Left cardiac atrium (tissue), 4 donors: ENCODE measurements at regions of chr3 and their contacts with region 1.

Region 1: DNA sequence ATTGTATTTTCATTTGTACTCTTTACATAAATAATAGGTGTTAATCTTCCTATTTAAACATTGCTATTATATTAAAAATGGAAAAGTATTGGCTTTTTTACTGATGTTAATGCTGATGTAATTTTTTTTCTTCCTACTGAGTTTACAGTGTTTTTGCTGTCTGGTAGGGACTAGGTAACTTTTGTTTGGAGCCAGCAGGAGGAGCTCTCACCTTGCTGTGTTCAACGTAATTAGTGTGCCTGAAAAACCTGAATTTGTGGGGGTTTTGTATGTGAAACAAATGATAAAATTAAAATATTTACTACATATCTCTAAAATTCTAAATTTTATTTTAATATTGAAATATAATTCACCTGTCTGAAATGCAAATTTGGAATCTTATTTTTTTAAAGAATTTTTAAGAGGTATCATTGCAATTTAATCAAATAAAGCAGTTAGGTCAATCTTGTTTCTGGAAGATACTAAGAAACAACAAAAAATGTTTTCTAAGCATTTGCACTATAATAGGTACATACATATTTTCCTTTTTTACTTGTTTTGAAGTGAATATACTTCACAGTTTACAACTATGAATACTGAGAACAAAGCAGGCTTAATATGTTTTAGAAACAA is 48.8 kb downstream of the EPHA6 start:
- DNase-seq: no peak
- ATAC-seq: no peak

Region 2: DNA sequence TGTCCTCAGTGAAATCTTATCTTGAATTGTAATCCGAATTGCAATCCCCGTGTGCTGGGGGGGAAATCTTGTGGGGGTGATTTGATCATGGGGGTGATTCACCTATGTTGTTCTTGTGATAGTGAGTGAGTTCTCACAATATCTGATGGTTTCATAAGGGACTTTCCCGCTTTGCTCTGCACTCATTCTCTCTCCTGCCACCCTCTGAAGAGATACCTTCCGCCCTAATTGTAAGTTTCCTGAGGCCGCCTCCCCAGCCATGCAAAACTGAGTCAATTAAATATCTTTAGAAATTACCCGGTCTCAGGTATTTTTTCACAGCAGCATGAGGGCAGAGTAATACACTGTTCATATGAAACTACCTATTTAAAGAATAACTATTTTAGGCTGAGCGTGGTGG is 352.9 kb before region 1 on chr3:
- intact Hi-C with region 1: no loop called
- DNase-seq: no peak
- ATAC-seq: no peak

Region 3: DNA sequence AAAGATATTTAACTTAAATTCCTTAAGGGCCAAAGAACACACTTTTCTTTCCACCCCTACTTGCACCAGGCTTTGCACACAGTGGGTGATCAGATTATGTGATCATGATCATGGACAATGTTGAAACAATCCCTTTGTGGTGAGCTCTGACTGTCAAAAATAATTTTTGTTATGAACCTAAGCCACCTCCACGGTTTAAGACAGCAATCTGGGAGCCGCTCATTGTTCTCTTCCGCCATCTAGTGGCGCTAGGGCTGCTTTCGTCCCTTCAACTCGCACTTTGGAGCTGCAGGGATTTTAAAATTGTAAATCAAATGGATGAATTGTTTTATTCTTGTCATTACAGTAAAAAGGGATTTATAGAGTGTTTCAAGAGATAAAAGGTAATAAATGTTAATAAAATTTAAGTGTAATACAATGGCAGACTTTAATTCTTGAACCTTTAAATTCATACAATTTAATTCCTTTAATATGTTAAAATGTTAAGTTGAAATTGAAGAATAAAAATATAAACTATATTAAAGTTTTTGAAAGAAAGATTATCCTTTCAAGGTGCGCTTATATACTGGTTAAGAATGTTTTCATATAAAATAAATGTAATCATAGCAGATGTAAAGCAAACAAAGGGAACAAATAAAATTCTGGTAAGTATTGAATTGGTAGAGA is 856.1 kb after region 1 on chr3:
- intact Hi-C with region 1: loop called in 1 of 2 experiments (anchors 5 kb)
- DNase-seq: peak; percentile 65
- ATAC-seq: peak; percentile 68 to 76